Left cardiac atrium (tissue), 4 donors: ENCODE measurements at regions of chr2 and their contacts with region 1.

Region 1: GRCh38 chr2:85066874-85067351 is 66.3 kb upstream of the TCF7L1 start:
- DNase-seq: peak; percentile 84
- ATAC-seq: peak; percentile 85 to 87

Region 2: DNA sequence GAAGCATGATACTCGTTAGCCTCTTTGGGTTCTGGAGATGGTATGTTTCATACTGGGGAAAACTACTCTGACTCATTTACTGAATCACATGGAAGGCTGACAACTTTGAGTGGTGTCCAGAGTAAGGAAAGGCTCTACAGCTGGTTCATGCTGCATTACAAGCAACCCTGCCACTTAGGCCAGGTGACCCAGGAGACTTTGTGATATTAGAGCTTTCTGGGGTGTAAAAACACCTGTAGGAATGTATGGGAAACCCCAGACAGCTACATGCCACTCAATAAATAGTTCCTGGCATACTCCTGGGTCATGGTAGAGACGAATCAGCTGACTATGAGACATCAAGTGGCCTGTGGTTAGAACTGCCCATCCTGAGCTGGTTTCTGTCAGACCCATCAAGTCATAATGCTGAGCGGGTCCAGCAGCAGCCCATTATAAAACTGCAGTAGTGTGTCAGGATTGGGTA is 44.9 kb after region 1 on chr2:
- intact Hi-C with region 1: loop called in 1 of 2 experiments (anchors 10 kb)
- DNase-seq: no peak
- ATAC-seq: no peak

Region 3: GRCh38 chr2:85288244-85288725 is 221.4 kb after region 1 on chr2:
- intact Hi-C with region 1: loop called in 1 of 2 experiments (anchors 5 kb)
- DNase-seq: no peak
- ATAC-seq: no peak

Region 4: GRCh38 chr2:85302121-85302520 is 235.2 kb after region 1 on chr2:
- intact Hi-C with region 1: loop called (anchors 2 kb)
- DNase-seq: no peak
- ATAC-seq: peak; percentile 27 to 63